ENCODE measurements at regions of chr4 and their contacts with region 1.

Region 1: DNA sequence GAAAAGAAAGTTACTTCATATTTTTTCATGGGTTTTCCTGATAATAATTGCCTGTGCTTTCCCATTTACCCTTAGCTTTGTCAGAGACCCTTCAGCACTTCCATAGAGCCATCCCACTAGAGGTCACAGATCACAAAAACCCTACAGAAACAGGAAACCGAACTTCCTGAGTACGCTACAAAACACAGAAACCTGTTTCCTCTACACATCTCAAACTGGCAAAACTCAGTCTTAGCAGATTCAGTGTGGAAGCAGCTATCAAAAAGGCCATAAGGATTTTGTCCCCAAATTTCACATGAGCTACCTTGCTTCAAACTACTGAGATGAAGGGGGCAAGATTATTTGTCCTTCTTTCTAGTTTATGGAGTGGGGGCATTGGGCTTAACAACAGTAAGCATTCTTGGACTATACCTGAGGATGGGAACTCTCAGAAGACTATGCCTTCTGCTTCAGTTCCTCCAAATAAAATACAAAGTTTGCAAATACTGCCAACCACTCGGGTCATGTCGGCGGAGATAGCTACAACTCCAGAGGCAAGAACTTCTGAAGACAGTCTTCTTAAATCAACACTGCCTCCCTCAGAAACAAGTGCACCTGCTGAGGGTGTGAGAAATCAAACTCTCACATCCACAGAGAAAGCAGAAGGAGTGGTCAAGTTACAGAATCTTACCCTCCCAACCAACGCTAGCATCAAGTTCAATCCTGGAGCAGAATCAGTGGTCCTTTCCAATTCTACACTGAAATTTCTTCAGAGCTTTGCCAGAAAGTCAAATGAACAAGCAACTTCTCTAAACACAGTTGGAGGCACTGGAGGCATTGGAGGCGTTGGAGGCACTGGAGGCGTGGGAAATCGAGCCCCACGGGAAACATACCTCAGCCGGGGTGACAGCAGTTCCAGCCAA is at the start of gene MMRN1:
- DNase-seq: peak; percentile 7
- H3K4me3 Mint-ChIP-seq: peak within 1 kb of the TSS; percentile 59
- H3K27ac Mint-ChIP-seq: peak within 1 kb of the TSS; percentile 57
- H3K4me1 Mint-ChIP-seq: peaks cover 16% of the 10 kb centered on the region
- H3K27me3 Mint-ChIP-seq: no peaks in the 10 kb centered on the region
- total RNA-seq, gene MMRN1: 0.05 to 0.10 TPM

Region 2: GRCh38 chr4:89807441-89808140 is 87.3 kb before region 1 on chr4:
- CTCF ChIA-PET with region 1: no interaction called
- intact Hi-C with region 1: no loop called
- DNase-seq: no peak
- H3K4me3 Mint-ChIP-seq: no peak overlapping the region
- H3K27ac Mint-ChIP-seq: no peak overlapping the region
- H3K4me1 Mint-ChIP-seq: no peaks in the 10 kb centered on the region
- H3K27me3 Mint-ChIP-seq: no peaks in the 10 kb centered on the region

Region 3: DNA sequence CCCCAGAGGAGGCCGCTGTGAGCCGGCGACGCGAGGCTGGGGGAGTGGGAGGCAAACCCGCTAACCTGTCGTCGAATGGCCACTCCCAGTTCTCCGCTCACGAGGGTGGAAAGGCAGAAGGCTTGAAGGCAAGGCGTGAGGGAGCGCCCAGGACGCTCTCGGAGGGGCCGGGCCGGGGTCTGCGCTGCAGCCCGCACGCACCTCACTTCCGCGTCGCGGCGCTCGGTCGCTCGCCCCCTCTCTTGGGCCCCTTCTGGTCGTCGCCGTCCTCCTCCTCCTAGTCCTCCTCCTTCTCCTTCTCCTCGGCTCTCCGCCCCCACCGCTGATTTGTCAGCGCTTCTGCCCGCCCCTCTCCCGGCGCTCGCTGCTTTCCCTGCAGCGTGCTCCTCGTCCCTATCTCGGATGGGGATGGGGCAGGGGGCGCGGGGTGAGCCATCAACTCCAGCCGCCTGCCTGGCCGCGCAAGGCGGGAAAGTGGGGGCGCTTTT is 58.0 kb before region 1 on chr4 and contains the start of gene SNCA:
- CTCF ChIA-PET with region 1: no interaction called
- intact Hi-C with region 1: loop called (anchors 2 kb)
- DNase-seq: peak; percentile 63
- H3K4me3 Mint-ChIP-seq: peak within 1 kb of the TSS; percentile 78
- H3K27ac Mint-ChIP-seq: no peak within 1 kb of the TSS
- H3K4me1 Mint-ChIP-seq: peaks cover 17% of the 10 kb centered on the region
- H3K27me3 Mint-ChIP-seq: peaks cover 52% of the 10 kb centered on the region
- total RNA-seq, gene SNCA: 1.0 to 1.1 TPM

Region 4: GRCh38 chr4:89847571-89848325 is 47.2 kb before region 1 on chr4:
- CTCF ChIA-PET with region 1: no interaction called
- intact Hi-C with region 1: no loop called
- DNase-seq: no peak
- H3K4me3 Mint-ChIP-seq: no peak overlapping the region
- H3K27ac Mint-ChIP-seq: no peak overlapping the region
- H3K4me1 Mint-ChIP-seq: no peaks in the 10 kb centered on the region
- H3K27me3 Mint-ChIP-seq: no peaks in the 10 kb centered on the region